B cell (primary cell): ENCODE measurements at regions of chr12 and their contacts with region 1.

Region 1: DNA sequence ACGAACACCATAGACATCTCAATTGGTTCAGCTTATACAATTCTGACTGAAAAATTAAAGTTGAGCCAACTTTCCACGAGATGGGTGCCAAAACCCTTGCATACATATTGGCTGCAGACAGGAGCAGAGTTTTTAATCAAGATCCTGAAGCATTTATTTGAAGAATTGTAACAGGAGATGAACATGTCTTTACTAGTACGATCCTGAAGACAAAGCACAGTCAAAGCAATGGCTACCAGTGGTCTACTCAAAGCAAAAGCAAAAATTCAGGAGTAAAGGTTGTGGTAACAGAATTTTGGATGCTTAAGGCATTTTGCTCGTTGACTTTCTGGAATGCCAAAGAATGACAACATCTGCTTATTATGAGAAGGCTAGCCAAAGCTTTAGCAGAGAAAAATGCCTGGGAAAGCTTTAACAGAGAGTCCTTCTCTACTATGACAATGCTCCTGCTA is 20.7 kb downstream of the ZDHHC17 start:
- DNase-seq: no peak
- ATAC-seq: no peak
- H3K4me3 ChIP-seq: no peak overlapping the region
- H3K4me3 Mint-ChIP-seq: no peak overlapping the region
- H3K27ac ChIP-seq: no peak overlapping the region
- H3K27ac Mint-ChIP-seq: no peak overlapping the region
- H3K4me1 ChIP-seq: peaks cover 8 to 10% of the 10 kb centered on the region in 2 donors
- H3K4me1 Mint-ChIP-seq: peaks cover 45% of the 10 kb centered on the region
- H3K27me3 ChIP-seq: no peaks in the 10 kb centered on the region
- H3K27me3 Mint-ChIP-seq: no peaks in the 10 kb centered on the region
- CTCF ChIP-seq: no peak

Region 2: GRCh38 chr12:76226397-76226796 is 558.2 kb before region 1 on chr12:
- CTCF ChIA-PET with region 1: no interaction called
- POLR2A ChIA-PET with region 1: no interaction called
- intact Hi-C with region 1: no loop called
- DNase-seq: no peak
- ATAC-seq: no peak
- H3K4me3 ChIP-seq: no peak overlapping the region
- H3K4me3 Mint-ChIP-seq: no peak overlapping the region
- H3K27ac ChIP-seq: no peak overlapping the region
- H3K27ac Mint-ChIP-seq: no peak overlapping the region
- H3K4me1 ChIP-seq: no peaks in the 10 kb centered on the region
- H3K4me1 Mint-ChIP-seq: no peaks in the 10 kb centered on the region
- H3K27me3 ChIP-seq: no peaks in the 10 kb centered on the region
- H3K27me3 Mint-ChIP-seq: peaks cover 16% of the 10 kb centered on the region
- CTCF ChIP-seq: no peak

Region 3: GRCh38 chr12:76757694-76758093 is 26.9 kb before region 1 on chr12:
- CTCF ChIA-PET with region 1: interaction called, 13 read pairs
- POLR2A ChIA-PET with region 1: no interaction called
- intact Hi-C with region 1: loop called (anchors 5 kb)
- DNase-seq: no peak
- ATAC-seq: no peak
- H3K4me3 ChIP-seq: no peak overlapping the region
- H3K4me3 Mint-ChIP-seq: no peak overlapping the region
- H3K27ac ChIP-seq: no peak overlapping the region
- H3K27ac Mint-ChIP-seq: no peak overlapping the region
- H3K4me1 ChIP-seq: no peaks in the 10 kb centered on the region
- H3K4me1 Mint-ChIP-seq: no peaks in the 10 kb centered on the region
- H3K27me3 ChIP-seq: no peaks in the 10 kb centered on the region
- H3K27me3 Mint-ChIP-seq: peaks cover 3% of the 10 kb centered on the region
- CTCF ChIP-seq: no peak

Region 4: GRCh38 chr12:76830436-76830835 is 45.8 kb after region 1 on chr12:
- CTCF ChIA-PET with region 1: no interaction called
- POLR2A ChIA-PET with region 1: no interaction called
- intact Hi-C with region 1: no loop called
- DNase-seq: no peak
- ATAC-seq: no peak
- H3K4me3 ChIP-seq: no peak overlapping the region
- H3K4me3 Mint-ChIP-seq: no peak overlapping the region
- H3K27ac ChIP-seq: no peak overlapping the region
- H3K27ac Mint-ChIP-seq: no peak overlapping the region
- H3K4me1 ChIP-seq: no peaks in the 10 kb centered on the region
- H3K4me1 Mint-ChIP-seq: no peaks in the 10 kb centered on the region
- H3K27me3 ChIP-seq: no peaks in the 10 kb centered on the region
- H3K27me3 Mint-ChIP-seq: no peaks in the 10 kb centered on the region
- CTCF ChIP-seq: no peak

Region 5: DNA sequence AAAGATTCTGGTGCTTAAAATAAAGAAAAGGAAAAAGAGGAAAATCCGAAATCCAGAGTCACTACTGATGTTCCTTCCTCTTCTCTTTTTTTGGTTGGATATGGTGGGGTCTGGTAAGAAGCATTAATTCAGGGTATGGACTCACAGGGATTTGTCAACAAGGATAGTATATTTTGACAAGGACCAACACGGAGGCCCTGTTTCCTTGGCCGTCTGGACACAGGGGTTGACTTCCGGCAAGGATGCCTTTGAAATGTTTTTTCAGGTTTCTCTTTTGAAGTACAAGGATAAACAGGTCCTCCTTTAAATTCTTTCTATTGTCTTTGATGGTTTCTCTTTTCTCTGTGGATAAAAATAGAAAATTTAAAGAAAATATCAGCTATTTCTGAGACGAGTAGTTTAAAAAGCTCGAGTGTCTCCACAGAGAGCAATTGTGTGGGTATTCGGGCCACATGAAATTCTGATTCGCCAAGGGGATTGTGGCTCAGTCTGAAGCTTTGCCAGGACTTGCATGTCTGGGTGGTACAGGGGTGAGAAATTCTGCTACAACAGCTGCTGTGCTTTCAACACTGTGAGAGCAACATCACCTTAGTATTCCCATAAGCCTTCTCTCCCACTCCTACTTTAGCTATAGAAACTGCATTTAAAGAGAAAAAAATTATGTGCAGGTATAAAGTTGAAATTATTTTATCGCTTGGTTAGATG is 182.7 kb after region 1 on chr12:
- CTCF ChIA-PET with region 1: no interaction called
- POLR2A ChIA-PET with region 1: no interaction called
- intact Hi-C with region 1: no loop called
- DNase-seq: no peak
- ATAC-seq: no peak
- H3K4me3 ChIP-seq: no peak overlapping the region
- H3K4me3 Mint-ChIP-seq: no peak overlapping the region
- H3K27ac ChIP-seq: no peak overlapping the region
- H3K27ac Mint-ChIP-seq: no peak overlapping the region
- H3K4me1 ChIP-seq: no peaks in the 10 kb centered on the region
- H3K4me1 Mint-ChIP-seq: no peaks in the 10 kb centered on the region
- H3K27me3 ChIP-seq: no peaks in the 10 kb centered on the region
- H3K27me3 Mint-ChIP-seq: no peaks in the 10 kb centered on the region
- CTCF ChIP-seq: no peak